ENCODE measurements at regions of chr15 and their contacts with region 1.

Region 1: DNA sequence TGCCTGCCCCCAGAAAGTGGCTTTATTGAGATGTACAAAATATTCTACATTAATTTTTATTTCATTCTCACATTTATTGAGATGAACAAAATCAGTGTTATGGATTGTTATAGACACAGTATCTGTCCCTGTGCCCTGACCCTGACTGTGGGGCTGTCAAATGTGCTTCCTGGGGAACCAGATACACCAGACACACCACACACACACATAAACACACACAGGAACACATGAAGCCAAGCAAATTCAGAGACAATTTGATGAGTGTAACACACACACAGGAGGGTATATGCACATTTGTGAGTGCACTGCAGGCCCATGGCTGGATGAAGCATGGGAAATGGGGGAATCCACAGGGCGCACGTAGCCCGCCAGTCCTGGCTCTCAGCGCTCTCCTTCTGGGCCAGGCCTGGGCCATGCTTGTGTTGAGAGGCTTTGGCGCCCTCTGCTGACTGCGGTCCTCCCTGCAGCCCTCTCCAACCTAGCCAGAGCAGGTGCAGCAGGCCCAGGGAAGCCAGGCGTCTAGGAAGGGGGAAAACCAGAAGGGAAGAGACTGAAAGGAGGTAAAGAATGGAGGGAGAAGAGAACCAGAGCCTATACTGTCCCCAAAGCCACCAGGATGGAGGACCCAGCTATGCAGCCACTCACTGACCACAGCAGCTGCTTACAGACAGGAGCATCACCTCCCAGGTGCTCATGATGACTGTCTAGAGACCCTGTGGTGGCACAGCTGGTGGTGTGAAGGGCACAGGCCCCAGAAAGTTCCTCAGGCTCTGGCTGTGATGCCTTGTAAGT is 18.0 kb upstream of the LOXL1 start:
- DNase-seq: no peak
- H3K4me3 ChIP-seq: no peak overlapping the region
- H3K27me3 ChIP-seq: no peaks in the 10 kb centered on the region
- CTCF ChIP-seq: peak; percentile 97

Region 2: DNA sequence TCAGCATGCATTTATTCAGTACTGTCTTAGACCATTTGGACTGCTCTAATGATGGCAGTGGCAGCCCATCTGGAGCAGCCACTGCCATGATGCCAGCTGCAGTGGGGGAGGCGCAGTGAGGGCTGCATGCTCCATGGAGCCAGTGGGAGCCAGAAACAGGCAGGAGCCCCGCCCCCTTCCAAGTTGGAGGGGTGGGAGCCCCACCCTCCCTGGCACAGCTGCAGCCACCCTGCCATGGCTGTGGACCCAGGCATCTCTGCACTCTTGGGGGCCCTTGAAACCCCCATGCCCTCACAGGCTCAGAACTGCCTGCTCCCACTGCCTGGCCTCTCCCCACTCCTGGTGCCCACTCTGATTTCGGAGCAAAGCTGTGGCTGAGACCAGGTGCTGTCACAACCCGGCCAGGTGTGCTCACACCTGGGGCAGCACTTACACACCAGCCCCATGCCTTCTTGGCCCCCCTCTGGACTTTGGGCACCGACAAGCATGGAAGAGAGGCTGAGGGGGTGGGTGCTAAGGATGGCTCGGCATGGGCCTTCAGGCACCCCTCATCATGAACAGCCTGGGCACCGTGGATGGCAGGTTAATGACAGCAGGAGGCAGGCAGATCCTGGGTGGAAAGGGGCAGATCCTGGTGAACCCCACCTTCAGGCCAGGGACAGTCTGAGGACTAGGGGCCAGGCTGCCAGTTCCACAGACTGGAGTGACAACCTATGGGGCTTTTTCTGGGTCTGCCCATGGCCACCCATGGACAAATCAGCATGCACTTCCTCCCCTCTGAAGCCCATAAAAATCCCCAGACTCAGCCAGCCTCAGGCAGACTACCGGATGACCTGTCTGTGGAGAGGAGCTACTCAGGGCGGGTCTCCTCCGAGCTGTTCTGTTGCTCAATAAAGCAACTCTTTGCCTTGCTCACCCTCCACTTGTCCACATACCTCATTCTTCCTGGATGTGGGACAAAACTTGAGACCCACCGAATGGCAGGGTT is 16.6 kb before region 1 on chr15:
- CTCF ChIA-PET with region 1: interaction called, 44 read pairs
- POLR2A ChIA-PET with region 1: no interaction called
- DNase-seq: no peak
- H3K4me3 ChIP-seq: no peak overlapping the region
- H3K27me3 ChIP-seq: peaks cover 7% of the 10 kb centered on the region; the same call in 1 of the 2 replicates
- CTCF ChIP-seq: no peak

Region 3: DNA sequence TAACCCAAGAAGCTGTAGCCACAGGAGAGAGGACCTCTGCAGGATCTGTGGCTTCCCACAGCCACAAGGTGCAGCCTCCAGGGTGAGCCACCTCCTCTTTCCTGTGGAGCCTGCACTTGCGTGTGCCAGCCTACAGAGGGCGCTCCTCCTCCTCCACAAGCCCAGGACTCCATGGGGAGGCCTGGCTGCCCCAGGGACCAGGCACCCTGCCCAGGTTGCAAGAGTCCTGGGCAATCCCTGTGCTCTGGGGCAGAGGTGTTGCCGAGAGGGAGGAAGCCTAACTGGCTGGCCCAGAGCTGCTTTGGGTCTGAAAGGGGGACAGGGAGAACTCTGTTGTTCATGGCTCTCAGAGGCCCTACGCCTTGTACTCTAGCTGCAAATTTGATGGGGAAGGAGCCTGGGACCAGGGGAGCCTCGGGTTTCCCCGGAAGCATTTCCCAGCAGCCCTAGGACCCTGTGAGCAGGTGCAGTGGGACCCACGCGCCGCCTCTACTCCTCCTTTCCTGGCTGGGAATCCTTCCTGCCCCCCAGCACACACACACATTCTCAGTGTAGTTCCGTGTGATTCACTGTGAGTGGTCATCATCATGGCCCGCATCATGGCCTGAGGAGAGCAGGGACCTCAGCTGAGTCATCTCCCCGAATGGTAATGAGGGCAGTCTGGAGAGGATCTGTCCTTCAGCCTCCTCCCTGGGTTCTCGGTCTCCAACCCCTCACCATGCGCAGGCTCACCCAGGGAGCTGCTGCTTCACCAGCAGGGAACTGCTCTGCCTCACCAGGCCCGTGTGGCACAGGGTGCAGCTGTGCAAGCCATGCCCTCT is 10.6 kb before region 1 on chr15:
- CTCF ChIA-PET with region 1: interaction called, 44 read pairs
- POLR2A ChIA-PET with region 1: no interaction called
- DNase-seq: peak; percentile 39
- H3K4me3 ChIP-seq: no peak overlapping the region
- H3K27me3 ChIP-seq: no peaks in the 10 kb centered on the region
- CTCF ChIP-seq: peak; percentile 97

Region 4: DNA sequence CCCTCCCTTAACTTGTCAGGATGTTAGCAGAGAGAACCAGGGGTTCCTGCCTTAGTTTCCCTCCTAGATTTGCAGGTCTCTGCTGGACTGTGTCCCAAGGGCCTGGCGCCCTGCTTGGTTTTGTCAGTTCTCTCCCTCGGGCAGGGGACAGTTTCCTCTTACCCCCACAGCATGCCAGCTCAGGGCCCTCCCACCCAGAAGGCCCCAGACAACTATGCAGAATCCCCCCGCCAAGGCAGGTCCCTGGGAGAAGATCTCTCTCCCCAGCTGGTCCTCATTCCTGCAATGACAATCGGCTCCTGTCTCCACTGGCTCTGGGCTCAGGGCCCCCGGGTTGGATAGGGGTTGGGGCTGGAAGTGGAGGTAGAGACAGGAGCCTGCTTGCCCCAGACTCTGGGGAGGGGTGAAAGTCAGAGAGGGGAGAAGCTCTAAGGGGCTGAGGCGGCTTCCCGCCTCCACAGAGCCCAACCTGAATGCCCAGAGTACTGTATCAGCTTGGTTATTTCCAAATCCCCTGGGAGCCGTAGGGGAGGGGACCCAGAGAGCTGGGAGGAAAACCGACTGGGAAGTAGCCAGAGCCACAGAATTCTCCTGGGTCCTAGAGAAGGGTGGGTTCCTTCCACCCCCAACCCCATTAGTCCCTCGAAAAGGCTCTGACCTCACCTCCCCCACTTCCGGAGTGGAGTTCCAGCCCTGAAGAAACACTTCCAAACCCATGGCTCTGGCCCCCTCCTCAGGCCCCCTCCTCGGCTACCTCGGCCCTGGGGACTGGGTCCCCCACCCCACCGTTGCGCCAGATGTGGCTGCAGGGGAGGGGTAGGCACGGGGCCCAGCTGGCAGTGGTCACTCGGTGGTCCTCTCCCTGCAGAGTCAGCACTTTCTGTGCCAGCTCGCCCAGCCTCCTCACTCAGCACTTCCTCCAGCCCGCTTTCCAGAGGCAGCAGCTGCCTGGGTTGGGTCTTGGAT is 14.2 kb after region 1 on chr15:
- CTCF ChIA-PET with region 1: interaction called, 68 read pairs
- POLR2A ChIA-PET with region 1: interaction called, 3 read pairs
- DNase-seq: no peak
- H3K4me3 ChIP-seq: no peak overlapping the region
- H3K27me3 ChIP-seq: no peaks in the 10 kb centered on the region
- CTCF ChIP-seq: no peak

Region 5: DNA sequence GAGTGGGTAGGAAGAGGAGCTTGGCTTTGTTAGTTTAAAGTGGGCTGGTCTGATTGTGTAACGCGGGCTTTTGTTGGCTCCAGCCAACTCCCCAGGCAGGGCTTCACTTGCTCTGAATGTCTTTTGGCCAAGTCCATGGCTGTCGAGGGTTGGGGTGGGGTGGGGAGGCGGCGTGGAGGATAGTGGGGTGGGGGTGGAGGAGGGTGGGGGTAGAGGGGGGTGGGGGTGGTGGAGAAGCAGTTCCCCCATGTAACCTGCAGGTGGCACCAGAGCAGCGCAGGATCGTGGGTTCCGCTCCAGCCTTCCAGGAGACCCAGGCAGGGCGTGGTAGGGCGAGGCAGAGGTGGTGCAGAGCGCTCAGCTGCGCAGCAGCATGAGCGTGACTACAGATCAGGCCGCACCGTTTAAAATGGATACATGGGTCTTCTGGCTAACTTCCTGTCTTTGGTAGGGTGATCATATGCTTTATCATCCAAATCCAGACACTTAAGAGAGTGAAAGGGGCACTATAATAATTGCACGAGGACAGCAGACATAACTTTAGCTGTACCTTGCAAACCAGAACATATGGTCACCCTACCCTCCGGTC is 145.8 kb after region 1 on chr15:
- CTCF ChIA-PET with region 1: no interaction called
- POLR2A ChIA-PET with region 1: no interaction called
- DNase-seq: peak; percentile 51
- H3K4me3 ChIP-seq: no peak overlapping the region
- H3K27me3 ChIP-seq: no peaks in the 10 kb centered on the region
- CTCF ChIP-seq: peak; percentile 76